Activated CD4-positive, alpha-beta T cell treated with anti-CD3 and anti-CD28 coated beads, Interleukin-2, amount 10 ng/mL, durations not matched to agents 24 days and 14 days (primary cell): ENCODE measurements at regions of chr5 and their contacts with region 1.

Region 1: GRCh38 chr5:131382407-131383395 is 118.8 kb downstream of the CDC42SE2 start:
- DNase-seq: peak; percentile 89
- H3K4me3 Mint-ChIP-seq: peak overlapping the region; percentile 77
- H3K27ac Mint-ChIP-seq: peak overlapping the region; percentile 91
- H3K4me1 Mint-ChIP-seq: peaks cover 71% of the 10 kb centered on the region
- H3K27me3 Mint-ChIP-seq: no peaks in the 10 kb centered on the region

Region 2: DNA sequence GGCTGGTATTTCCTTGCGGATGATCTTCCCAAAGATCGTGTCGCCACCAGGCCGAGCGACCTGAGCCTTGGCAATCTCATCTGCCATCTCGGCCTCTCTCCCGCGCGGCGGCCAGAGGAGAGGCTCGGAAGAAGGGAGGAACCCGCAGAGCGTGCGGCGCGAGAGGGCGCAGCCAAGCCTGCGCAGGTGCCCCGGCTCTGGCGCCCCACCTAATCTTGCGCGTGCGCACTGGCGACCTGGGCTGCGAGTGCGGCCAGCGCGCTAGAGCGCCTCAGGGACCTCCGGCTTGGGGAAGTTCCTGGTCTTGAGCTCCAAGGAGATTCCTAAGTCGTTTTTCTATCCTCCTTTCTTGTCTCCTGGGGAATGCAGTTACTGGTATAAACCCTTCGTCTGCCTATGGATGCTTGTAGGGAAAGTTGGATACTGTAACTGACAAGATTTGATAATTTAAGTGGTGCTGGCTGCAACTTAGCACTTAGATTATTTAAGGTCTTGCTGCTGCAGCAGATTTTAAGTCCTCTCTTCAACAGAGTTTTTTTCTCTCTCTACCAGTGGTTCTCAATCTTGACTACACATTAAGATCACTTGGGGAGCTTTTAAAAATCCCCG is 217.5 kb before region 1 on chr5 and contains the start of gene HINT1:
- intact Hi-C with region 1: loop called (anchors 1 kb)
- DNase-seq: peak; percentile 98
- H3K4me3 Mint-ChIP-seq: peak within 1 kb of the TSS; percentile 99
- H3K27ac Mint-ChIP-seq: peak within 1 kb of the TSS; percentile 100
- H3K4me1 Mint-ChIP-seq: peaks cover 45% of the 10 kb centered on the region
- H3K27me3 Mint-ChIP-seq: no peaks in the 10 kb centered on the region
- total RNA-seq, gene HINT1: 280 and 282 TPM in 2 replicates

Region 3: DNA sequence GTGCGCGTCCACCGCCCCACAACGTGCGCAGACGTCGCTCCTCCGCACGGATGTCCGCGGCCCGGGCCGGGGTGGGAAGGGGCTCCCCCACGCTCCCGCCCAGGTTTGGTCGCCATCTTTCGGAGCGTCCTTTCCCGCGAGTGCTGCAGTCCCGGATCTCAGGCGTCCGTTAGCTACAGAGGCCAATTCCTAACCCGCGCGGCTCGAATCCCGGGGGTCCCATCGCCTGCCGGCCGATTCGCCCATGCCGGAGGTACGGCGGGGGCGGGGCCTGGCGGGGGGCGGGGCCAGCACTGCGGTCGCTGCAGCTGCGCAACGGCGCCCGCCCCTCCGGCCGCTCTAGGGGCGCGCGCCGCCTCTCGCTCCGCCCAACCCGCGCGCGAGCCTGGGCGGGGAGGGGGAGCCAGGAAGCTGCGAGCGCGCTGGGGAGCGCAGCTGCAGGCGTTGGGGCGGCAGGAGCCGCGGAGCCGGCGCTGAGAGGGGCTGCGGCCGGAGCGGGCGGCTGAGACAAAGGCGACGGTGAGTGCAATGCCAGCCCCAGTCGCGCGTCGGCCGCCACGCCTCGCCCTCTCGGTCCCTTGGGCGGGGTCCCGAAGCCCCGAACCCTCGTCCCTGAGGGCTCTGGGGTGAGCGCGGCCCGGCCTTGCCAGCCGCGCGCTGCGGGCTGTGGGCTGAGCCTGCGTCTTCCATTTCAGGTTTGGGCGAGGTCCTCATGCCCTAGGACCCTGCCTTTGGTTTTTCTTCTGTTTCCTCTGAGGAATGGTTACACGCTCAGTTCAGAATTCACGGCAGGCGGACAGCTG is 118.9 kb before region 1 on chr5 and contains the start of gene CDC42SE2:
- intact Hi-C with region 1: loop called (anchors 2 kb)
- DNase-seq: peak; percentile 97
- H3K4me3 Mint-ChIP-seq: peak within 1 kb of the TSS; percentile 85
- H3K27ac Mint-ChIP-seq: peak within 1 kb of the TSS; percentile 93
- H3K4me1 Mint-ChIP-seq: peaks cover 34% of the 10 kb centered on the region
- H3K27me3 Mint-ChIP-seq: no peaks in the 10 kb centered on the region
- total RNA-seq, gene CDC42SE2: 96.2 and 99.0 TPM in 2 replicates

Region 4: DNA sequence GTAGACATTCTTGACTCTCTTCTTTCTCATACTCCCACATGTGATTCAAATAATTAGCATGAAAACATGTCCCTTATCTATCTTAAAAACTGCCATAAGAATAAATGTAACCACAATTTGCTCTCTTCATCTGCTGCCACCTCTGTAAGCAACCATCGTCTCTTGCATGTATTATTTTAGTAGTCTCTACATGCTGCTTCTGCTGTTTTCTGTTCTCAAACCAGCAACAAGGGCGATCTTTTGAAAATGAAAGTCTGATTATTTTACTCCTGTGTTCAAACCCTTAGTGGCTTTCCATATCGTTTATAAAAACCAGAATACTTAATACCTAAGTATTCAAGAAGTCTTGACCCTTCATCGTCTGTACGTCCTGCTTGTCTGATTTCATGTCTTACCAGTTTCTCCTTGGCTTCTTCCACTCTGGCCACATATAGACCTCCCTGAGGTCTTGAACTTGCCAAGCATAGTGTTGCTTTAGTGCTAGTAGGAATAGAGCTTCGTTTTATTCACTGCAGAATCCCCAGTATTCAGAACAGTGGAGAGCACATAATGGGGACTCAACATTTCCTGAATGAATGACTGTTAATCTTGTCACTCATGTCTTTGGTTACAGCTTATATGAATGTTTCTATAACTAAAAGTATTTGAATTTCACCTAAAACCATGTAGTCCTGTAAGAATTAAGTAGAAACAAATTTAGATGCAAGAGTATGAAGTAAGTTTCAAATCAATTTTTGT is 108.2 kb before region 1 on chr5:
- intact Hi-C with region 1: no loop called
- DNase-seq: peak; percentile 66
- H3K4me3 Mint-ChIP-seq: peak overlapping the region; percentile 80
- H3K27ac Mint-ChIP-seq: peak overlapping the region; percentile 93
- H3K4me1 Mint-ChIP-seq: peaks cover 64% of the 10 kb centered on the region
- H3K27me3 Mint-ChIP-seq: no peaks in the 10 kb centered on the region

Region 5: DNA sequence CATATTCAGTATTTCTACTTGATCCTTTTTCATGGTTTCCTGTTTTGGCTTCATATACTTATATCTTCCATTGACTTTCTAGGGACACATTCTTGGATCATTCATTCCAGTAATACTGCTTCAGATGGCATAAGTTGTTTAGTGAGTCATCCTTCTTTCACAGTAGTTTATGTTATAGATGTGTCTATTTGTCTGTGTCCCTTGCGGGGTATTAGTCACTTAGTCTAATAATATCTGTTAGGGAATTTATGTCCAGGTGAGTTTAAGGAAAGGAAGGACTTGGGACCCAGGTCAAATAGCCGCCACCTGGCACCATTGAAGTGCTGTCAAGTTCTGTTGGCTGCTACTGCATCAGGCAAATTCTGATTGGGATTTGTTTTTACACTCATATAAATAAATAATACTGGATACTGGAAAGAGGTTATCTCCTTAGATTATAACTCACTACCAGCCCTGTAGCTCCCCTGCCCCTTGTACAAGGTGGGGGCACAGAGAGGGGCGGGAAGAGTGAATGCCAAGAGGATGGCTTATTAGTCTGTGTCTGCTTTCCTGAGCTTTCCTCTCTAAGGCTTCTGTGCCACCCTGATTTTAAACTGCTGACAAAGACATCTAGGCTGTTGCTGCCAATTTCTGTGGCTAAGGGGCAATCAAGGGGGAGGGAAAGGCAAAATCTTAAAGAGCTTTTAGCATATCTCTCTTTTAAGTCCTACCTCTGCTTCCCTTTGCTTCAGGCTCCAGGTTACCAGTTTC is 54.0 kb before region 1 on chr5:
- intact Hi-C with region 1: loop called (anchors 2 kb)
- DNase-seq: no peak
- H3K4me3 Mint-ChIP-seq: no peak overlapping the region
- H3K27ac Mint-ChIP-seq: peak overlapping the region; percentile 74
- H3K4me1 Mint-ChIP-seq: peaks cover 38% of the 10 kb centered on the region
- H3K27me3 Mint-ChIP-seq: no peaks in the 10 kb centered on the region

Region 6: DNA sequence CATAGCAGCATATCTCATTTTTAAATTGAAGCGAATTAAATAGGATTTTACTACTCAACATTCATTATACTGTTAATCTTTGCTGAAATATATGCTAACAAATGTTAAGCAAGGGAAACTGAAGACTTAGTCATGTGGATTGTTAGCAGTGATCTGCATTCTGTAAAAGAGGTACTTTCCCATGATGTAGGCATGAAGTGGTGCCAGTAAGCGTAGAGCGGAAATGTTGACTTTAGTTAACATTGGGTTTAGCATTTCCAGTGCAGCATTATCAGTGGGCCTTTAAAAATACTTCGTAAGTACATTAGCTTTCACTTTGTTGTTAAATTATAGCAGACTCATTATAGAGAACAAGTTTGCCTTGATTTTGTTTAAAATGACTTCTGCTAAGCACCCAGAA is 11.4 kb after region 1 on chr5:
- intact Hi-C with region 1: loop called (anchors 1 kb)
- DNase-seq: peak; percentile 88
- H3K4me3 Mint-ChIP-seq: peak overlapping the region; percentile 70
- H3K27ac Mint-ChIP-seq: peak overlapping the region; percentile 92
- H3K4me1 Mint-ChIP-seq: peaks cover 68% of the 10 kb centered on the region
- H3K27me3 Mint-ChIP-seq: no peaks in the 10 kb centered on the region